Activated naive CD4-positive, alpha-beta T cell treated with anti-CD3 and anti-CD28 coated beads for 36 hours (primary cell): ENCODE measurements at regions of chr14 and their contacts with region 1.

Region 1: GRCh38 chr14:64986578-64987571 is at the start of gene FNTB:
- DNase-seq: peak; percentile 96
- H3K4me3 Mint-ChIP-seq: peak within 1 kb of the TSS; percentile 93
- H3K27ac Mint-ChIP-seq: peak within 1 kb of the TSS; percentile 96
- H3K4me1 Mint-ChIP-seq: peaks cover 28% of the 10 kb centered on the region
- H3K27me3 Mint-ChIP-seq: no peaks in the 10 kb centered on the region
- total RNA-seq, gene FNTB: 7.9 to 10.0 TPM

Region 2: GRCh38 chr14:64764641-64765520 is 222.0 kb before region 1 on chr14:
- CTCF ChIA-PET with region 1: no interaction called
- intact Hi-C with region 1: loop called (anchors 1 kb)
- DNase-seq: peak; percentile 74
- H3K4me3 Mint-ChIP-seq: peak overlapping the region; percentile 45
- H3K27ac Mint-ChIP-seq: no peak overlapping the region
- H3K4me1 Mint-ChIP-seq: peaks cover 6% of the 10 kb centered on the region
- H3K27me3 Mint-ChIP-seq: no peaks in the 10 kb centered on the region

Region 3: DNA sequence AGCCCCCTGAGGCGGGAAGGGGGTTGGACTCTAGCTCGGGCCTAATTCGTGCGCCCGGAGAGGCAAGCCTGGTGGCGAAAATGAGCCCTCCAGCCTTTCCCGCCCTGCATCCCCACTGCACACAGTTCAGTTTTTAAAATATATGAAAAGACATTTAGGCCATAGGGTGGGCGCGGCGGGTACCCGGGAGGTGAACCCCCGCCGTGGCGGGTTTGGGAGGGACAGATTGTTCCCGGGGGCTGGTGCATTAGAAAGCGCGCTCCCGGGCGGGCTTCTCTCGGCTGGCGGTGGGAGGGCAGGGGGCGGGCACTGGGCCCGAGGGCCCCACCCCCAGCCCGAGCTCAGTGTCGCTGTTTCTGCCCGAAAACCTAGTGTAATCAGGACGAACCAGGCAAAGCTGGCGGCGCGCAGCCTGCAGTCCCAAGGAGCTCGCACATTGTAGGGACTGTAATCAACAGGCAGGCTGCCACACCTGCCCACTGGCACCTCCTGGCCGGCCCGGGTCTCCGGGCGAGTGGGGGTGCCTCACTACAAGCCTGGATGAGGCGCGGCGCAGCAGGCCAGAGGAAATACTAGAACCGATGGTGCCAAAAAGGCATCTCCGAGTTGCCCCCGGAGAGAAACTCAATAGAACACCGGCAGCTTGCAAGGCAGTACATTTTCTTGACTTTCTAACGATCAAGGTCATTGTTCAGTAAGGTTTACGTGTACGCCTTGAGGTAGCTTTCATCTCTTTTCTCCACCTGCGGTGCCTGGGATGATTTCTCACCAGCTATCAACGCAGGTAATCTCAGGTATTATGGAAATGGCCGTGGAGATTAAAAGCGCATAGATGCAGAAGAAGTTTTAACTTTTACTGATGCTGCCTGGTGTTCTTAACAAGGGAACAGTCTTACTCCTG is 106.4 kb before region 1 on chr14:
- CTCF ChIA-PET with region 1: no interaction called
- intact Hi-C with region 1: loop called (anchors 1 kb)
- DNase-seq: peak; percentile 67
- H3K4me3 Mint-ChIP-seq: peak overlapping the region; percentile 81
- H3K27ac Mint-ChIP-seq: no peak overlapping the region
- H3K4me1 Mint-ChIP-seq: peaks cover 1% of the 10 kb centered on the region
- H3K27me3 Mint-ChIP-seq: peaks cover 13% of the 10 kb centered on the region

Region 4: GRCh38 chr14:64928239-64929013 is 58.4 kb before region 1 on chr14:
- CTCF ChIA-PET with region 1: interaction called, 4 read pairs
- intact Hi-C with region 1: loop called (anchors 1 kb)
- DNase-seq: no peak
- H3K4me3 Mint-ChIP-seq: no peak overlapping the region
- H3K27ac Mint-ChIP-seq: no peak overlapping the region
- H3K4me1 Mint-ChIP-seq: peaks cover 25% of the 10 kb centered on the region
- H3K27me3 Mint-ChIP-seq: no peaks in the 10 kb centered on the region

Region 5: GRCh38 chr14:65164068-65164824 is 177.4 kb after region 1 on chr14:
- CTCF ChIA-PET with region 1: no interaction called
- intact Hi-C with region 1: loop called (anchors 2 kb)
- DNase-seq: peak; percentile 57
- H3K4me3 Mint-ChIP-seq: no peak overlapping the region
- H3K27ac Mint-ChIP-seq: no peak overlapping the region
- H3K4me1 Mint-ChIP-seq: peaks cover 5% of the 10 kb centered on the region
- H3K27me3 Mint-ChIP-seq: no peaks in the 10 kb centered on the region

Region 6: DNA sequence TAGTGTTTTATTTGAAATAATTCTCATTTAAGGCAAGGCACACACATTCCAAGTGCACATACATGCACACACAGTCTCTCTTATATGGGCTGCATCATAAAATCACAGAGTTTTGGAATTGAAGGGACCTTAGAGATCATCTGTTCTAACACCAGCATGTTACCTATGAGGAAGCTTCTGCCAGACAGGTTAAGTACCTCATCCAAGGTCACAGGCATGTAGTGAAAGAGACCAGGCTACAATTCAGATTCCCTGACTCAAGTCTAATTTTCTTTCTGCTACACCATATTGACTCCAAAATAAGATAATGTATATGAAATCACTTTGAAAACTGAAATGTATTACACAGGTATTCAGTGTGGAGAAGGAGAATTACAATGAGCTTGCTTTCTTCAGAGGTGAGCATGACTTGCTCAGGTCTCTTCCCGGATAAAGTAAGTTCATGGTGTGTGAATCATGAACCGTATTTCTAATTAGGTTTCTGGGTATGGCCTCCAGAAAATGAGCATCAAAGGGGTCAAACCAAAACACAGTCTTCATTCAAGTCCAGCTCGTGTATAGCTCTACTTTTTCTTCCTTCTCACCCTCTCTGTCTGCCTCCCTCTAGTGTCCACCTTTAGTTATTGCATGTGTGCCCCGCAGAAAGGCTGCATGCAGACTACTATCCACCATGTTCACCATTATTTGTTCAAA is 837.6 kb after region 1 on chr14:
- CTCF ChIA-PET with region 1: no interaction called
- intact Hi-C with region 1: loop called (anchors 1 kb)
- DNase-seq: peak; percentile 78
- H3K4me3 Mint-ChIP-seq: no peak overlapping the region
- H3K27ac Mint-ChIP-seq: no peak overlapping the region
- H3K4me1 Mint-ChIP-seq: peaks cover 5% of the 10 kb centered on the region
- H3K27me3 Mint-ChIP-seq: no peaks in the 10 kb centered on the region